ENCODE measurements at regions of chr5 and their contacts with region 1.

Region 1: DNA sequence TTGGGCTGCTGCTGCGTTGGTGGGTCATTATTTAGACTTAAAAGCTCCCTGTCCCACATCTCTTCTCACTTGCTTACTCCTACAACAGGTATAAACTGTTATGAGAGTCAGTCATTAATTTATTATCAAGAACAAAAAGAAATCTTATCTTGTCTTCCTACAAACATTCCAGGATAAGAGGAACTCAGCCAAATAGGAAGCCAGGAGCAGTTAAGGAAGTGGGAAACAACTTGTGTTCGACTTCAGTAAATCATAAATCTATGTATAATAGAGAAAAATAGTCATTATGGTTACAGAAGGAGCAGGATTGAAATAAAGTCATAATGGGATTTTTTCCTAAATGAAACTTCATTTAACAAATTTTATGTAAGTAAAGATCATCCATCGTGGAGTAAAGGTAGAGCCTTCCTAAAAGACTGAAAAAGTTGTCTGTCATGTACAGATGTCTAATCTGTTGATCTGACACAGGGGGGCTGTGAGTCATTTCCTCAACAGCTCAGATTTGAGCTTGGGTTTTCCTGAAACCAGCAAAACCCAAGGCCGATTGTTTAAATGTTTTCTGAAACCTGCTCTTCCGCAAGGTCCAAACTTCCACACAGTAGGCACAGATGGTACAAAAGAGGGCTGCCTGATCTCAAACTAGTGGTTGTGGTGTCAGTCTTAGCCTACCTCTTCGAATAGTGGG is 25.3 kb upstream of the LRRTM2 start:
- ATAC-seq: no peak
- H3K4me3 ChIP-seq: no peak overlapping the region
- H3K27ac ChIP-seq: no peak overlapping the region
- H3K4me1 ChIP-seq: peaks cover 0 to 6% of the 10 kb centered on the region in 2 donors

Region 2: DNA sequence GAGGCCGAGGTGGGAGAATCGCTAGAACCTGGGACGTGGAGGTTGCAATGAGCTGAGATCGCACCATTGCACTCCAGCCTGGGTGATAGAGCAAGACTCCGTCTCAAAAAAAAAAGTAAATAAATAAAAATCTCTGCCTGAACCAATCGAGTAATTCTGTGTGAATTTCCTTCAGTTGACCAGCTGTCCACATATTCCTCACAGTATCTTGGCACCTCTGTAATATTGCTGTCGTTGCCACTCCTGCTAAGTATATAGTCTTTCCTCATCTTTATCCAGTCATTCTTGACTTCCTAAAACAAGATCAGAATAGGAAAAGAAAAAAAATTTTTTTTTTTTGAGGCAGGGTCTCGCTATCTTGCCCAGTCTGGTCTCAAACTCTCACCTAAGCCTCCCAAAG is 518.1 kb before region 1 on chr5:
- in situ Hi-C with region 1: no loop called
- ATAC-seq: no peak
- H3K4me3 ChIP-seq: no peak overlapping the region
- H3K27ac ChIP-seq: no peak overlapping the region
- H3K4me1 ChIP-seq: no peaks in the 10 kb centered on the region

Region 3: DNA sequence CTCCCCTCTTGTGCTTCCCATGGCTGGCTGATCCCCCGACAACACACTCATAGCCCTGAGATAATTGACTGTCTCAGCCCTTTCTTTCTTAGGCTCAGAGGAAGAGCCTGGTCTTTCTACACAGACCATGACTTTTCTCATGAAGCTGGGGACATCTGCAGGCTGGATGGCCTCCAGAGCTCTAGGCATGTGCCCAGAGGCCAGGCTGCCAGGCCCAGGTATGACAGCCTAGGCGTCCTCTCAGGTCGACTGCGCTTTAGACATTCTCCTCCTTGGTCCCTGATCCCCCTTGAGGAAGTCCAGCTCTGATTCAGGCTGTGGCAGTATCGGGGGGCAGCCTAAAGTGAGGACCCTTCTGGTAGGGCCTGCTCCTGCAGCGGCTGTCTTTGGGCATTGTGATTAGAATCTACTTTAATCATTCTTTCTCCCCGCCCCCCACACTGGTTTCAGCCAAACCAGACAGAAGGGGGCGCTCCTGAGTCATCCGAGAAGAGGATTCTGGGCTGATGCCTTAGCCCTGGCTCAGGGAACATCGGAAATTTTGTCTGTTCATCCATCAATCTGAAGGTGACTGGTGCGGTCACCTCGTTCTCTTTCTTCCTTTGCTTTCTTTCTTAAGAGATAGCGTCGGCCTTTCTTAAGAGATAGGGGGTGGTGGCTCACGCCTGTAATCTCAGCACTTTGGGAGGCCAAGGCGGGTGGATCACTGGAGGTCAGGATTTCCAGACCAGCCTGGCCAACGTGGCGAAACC is 258.7 kb before region 1 on chr5:
- in situ Hi-C with region 1: loop called in 1 of 9 experiments (anchors 25 kb)
- ATAC-seq: peak; percentile 48 to 97 (median 57)
- H3K4me3 ChIP-seq: no peak overlapping the region
- H3K27ac ChIP-seq: no peak overlapping the region
- H3K4me1 ChIP-seq: peaks cover 34 to 39% of the 10 kb centered on the region in 2 donors

Measured in motor neuron (in vitro differentiated cells).